Right cardiac atrium (tissue), 5 donors: ENCODE measurements at regions of chr1 and their contacts with region 1.

Region 1: DNA sequence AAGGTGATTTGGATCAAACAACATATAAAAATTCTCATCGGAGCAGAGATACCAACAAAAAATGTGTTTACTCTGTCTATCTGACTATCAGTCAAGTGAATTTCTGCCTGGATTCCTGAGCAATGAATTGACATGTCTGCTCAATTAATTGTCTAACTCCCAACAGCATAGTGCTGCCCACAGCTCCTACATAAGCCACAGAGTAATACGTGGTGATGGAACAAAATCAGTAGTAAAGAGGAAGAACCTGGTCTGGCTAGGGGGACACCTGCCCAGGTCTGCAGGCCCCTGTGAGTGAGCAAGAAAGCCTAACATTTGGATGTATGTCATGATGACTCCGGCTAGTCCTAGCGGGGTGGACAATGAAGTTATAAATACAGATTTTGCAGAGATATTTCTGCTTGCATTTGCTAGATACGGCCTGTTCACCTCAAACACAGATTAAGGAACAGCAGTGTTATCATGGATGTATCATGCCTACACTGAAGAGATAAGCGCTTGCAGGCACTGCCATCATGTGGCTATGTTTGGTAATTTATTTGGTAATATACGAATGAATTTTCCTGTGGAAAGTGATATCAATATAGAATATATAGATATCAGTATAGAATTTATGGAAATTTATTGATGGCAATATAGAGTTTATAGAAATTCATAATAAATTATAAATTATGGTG is 69.6 kb upstream of the LRRC8B start:
- DNase-seq: peak in 2 of 3 donors; percentile 23 to 64
- ATAC-seq: peak in 1 of 2 donors; percentile 38
- H3K4me3 ChIP-seq: no peak overlapping the region
- H3K27ac ChIP-seq: no peak overlapping the region
- H3K4me1 ChIP-seq: no peaks in the 10 kb centered on the region
- H3K27me3 ChIP-seq: peaks cover 3% of the 10 kb centered on the region

Region 2: DNA sequence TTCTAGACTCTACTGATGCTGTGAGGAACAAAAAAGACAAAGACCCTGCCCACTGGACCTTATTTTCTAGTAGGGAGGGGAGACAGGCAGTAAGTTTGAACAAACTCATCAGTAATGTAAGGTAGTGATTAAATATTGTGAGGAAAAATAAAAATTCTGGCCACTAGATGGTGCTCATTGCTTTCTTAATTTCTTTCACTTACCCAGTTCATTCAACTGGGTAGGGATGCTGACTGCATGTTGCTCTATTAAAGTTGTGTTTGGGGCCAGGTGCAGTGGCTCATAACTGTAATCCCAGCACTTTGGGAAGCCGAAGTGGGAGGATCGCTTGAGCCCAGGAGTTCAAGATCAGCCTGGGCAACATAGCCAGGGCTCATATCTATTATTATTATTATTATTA is 456.3 kb before region 1 on chr1:
- intact Hi-C with region 1: loop called in 2 of 4 experiments (anchors 5 kb)
- DNase-seq: no peak
- ATAC-seq: peak; percentile 87 to 88
- H3K4me3 ChIP-seq: no peak overlapping the region
- H3K27ac ChIP-seq: no peak overlapping the region
- H3K4me1 ChIP-seq: no peaks in the 10 kb centered on the region
- H3K27me3 ChIP-seq: no peaks in the 10 kb centered on the region

Region 3: GRCh38 chr1:89149229-89149628 is 305.8 kb before region 1 on chr1:
- intact Hi-C with region 1: no loop called
- DNase-seq: peak; percentile 21 to 60 (median 47)
- ATAC-seq: peak; percentile 64 to 78
- H3K4me3 ChIP-seq: no peak overlapping the region
- H3K27ac ChIP-seq: no peak overlapping the region
- H3K4me1 ChIP-seq: no peaks in the 10 kb centered on the region
- H3K27me3 ChIP-seq: no peaks in the 10 kb centered on the region

Region 4: GRCh38 chr1:89261926-89262515 is 193.0 kb before region 1 on chr1:
- intact Hi-C with region 1: loop called in 1 of 4 experiments (anchors 10 kb)
- DNase-seq: peak; percentile 28 to 80 (median 66)
- ATAC-seq: peak; percentile 65 to 72
- H3K4me3 ChIP-seq: peak overlapping the region; percentile 42
- H3K27ac ChIP-seq: peak overlapping the region; percentile 20
- H3K4me1 ChIP-seq: peaks cover 2% of the 10 kb centered on the region
- H3K27me3 ChIP-seq: no peaks in the 10 kb centered on the region

Region 5: DNA sequence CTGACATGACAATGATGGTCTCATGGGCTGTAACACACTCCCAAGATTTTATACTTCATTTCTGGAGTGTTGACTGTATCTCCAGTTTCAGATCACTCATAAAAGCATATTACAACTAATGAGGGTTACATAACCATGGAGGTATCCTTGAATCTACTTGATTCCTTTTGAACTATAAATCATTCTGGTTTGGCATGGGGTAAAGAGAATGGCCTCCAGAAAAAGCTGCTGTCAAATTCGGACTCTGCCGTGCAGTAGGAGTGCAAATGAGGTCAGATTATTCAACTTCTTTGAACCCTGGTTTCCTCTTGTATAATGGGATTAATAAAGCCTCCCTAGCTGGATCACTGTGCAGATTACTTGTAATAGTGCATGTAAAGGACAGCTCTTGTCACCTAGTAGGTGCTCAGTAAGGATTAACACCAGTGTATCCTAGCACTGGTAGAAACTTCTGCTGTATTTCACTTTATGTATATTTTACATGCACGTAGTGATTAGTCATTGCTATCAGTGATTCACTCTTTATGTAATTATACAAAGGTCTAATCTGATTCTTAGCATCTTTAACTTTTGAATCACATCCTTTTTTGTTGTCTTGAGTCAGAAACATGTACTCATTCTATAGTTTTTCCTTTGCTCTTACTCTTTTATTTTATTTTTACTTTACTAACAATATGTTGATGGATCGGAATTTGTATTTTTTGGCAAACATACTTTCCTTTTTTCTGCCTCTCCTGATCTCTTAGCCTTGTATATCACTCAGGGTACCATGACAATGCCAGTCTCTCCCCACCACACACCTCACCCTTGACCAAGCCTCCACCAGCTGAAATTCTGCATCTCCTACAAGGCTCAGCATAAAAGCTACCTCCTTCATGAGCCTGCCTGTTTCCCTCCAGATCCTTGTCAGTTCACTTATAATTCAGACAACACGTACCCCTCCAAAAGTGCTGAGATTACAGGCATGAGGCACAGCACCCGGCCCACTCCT is 181.1 kb after region 1 on chr1:
- intact Hi-C with region 1: no loop called
- DNase-seq: no peak
- ATAC-seq: no peak
- H3K4me3 ChIP-seq: no peak overlapping the region
- H3K27ac ChIP-seq: no peak overlapping the region
- H3K4me1 ChIP-seq: no peaks in the 10 kb centered on the region
- H3K27me3 ChIP-seq: no peaks in the 10 kb centered on the region